PC-9 (cell line): ENCODE measurements at regions of chr2 and their contacts with region 1.

Region 1: GRCh38 chr2:25991965-25992364 is 9.7 kb upstream of the KIF3C start:
- DNase-seq: no peak
- H3K4me3 ChIP-seq: no peak overlapping the region
- H3K27ac ChIP-seq: peak overlapping the region; percentile 50
- H3K4me1 ChIP-seq: peaks cover 21% of the 10 kb centered on the region
- H3K27me3 ChIP-seq: no peaks in the 10 kb centered on the region
- CTCF ChIP-seq: no peak

Region 2: GRCh38 chr2:26011990-26012856 is 20.3 kb after region 1 on chr2:
- CTCF ChIA-PET with region 1: interaction called, 4 read pairs
- POLR2A ChIA-PET with region 1: no interaction called
- intact Hi-C with region 1: loop called (anchors 1 kb)
- DNase-seq: peak; percentile 80 to 100
- H3K4me3 ChIP-seq: peak overlapping the region; percentile 23; the same call in 1 of the 2 replicates
- H3K27ac ChIP-seq: peak overlapping the region; percentile 93
- H3K4me1 ChIP-seq: peaks cover 76% of the 10 kb centered on the region
- H3K27me3 ChIP-seq: no peaks in the 10 kb centered on the region
- CTCF ChIP-seq: no peak

Region 3: GRCh38 chr2:26025509-26025908 is 33.5 kb after region 1 on chr2:
- CTCF ChIA-PET with region 1: interaction called, 10 read pairs
- POLR2A ChIA-PET with region 1: no interaction called
- intact Hi-C with region 1: no loop called
- DNase-seq: no peak
- H3K4me3 ChIP-seq: no peak overlapping the region
- H3K27ac ChIP-seq: no peak overlapping the region
- H3K4me1 ChIP-seq: no peaks in the 10 kb centered on the region
- H3K27me3 ChIP-seq: no peaks in the 10 kb centered on the region
- CTCF ChIP-seq: no peak

Region 4: GRCh38 chr2:26033818-26034636 is 42.1 kb after region 1 on chr2 and contains the start of gene RAB10:
- CTCF ChIA-PET with region 1: interaction called, 4 read pairs
- POLR2A ChIA-PET with region 1: no interaction called
- intact Hi-C with region 1: loop called (anchors 1 kb)
- DNase-seq: peak; percentile 98 to 100
- H3K4me3 ChIP-seq: peak within 1 kb of the TSS; percentile 94
- H3K27ac ChIP-seq: peak within 1 kb of the TSS; percentile 93
- H3K4me1 ChIP-seq: peaks cover 34% of the 10 kb centered on the region
- H3K27me3 ChIP-seq: no peaks in the 10 kb centered on the region
- CTCF ChIP-seq: no peak
- total RNA-seq, gene RAB10: 150 and 171 TPM in 2 replicates

Region 5: GRCh38 chr2:26088032-26088643 is 96.2 kb after region 1 on chr2:
- CTCF ChIA-PET with region 1: interaction called, 3 read pairs
- POLR2A ChIA-PET with region 1: no interaction called
- intact Hi-C with region 1: loop called (anchors 5 kb)
- DNase-seq: no peak
- H3K4me3 ChIP-seq: no peak overlapping the region
- H3K27ac ChIP-seq: no peak overlapping the region
- H3K4me1 ChIP-seq: no peaks in the 10 kb centered on the region
- H3K27me3 ChIP-seq: no peaks in the 10 kb centered on the region
- CTCF ChIP-seq: peak; percentile 78

Region 6: GRCh38 chr2:26144953-26145680 is 153.2 kb after region 1 on chr2:
- CTCF ChIA-PET with region 1: interaction called, 4 read pairs
- POLR2A ChIA-PET with region 1: no interaction called
- intact Hi-C with region 1: loop called (anchors 1 kb)
- DNase-seq: peak; percentile 51 to 60
- H3K4me3 ChIP-seq: no peak overlapping the region
- H3K27ac ChIP-seq: no peak overlapping the region
- H3K4me1 ChIP-seq: peaks cover 23% of the 10 kb centered on the region
- H3K27me3 ChIP-seq: no peaks in the 10 kb centered on the region
- CTCF ChIP-seq: peak; percentile 88

Region 7: DNA sequence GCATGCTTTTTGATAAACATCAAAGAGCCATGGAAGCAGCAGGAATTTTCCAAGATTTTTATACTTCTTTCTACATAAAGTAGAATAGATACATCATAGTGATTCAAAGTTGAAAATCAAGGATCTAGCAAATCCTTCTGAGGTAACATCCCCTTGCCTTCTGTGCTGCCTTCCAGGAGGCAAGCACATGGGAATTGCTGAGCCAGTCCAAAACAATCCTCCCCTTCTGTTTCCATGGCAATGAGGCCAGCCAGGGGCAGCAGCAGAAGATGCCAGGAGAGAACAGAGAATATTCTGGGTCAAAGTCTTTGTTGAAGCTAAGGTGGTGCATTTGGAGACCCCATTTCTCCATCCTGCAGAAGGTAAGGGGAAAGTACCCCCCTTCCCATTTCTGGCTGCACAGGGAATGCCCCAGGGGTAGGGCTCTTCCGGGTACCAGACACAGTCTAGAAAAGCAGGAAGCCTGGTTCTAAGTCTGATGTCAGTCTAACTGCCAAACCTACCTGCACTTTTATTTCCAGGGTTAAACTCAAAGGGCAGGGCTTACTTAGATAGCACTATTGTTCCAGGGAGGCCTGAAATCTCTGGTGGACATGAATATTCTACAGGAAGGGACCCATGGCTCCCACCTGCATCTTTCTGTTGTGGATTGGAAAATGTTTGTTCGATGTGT is 816.0 kb after region 1 on chr2:
- CTCF ChIA-PET with region 1: no interaction called
- POLR2A ChIA-PET with region 1: no interaction called
- intact Hi-C with region 1: no loop called
- DNase-seq: no peak
- H3K4me3 ChIP-seq: no peak overlapping the region
- H3K27ac ChIP-seq: no peak overlapping the region
- H3K4me1 ChIP-seq: peaks cover 11% of the 10 kb centered on the region; the same call in 1 of the 2 replicates
- H3K27me3 ChIP-seq: peaks cover 8% of the 10 kb centered on the region; the same call in 1 of the 2 replicates
- CTCF ChIP-seq: no peak